Transverse colon (tissue), 4 donors: ENCODE measurements at regions of chr2 and their contacts with region 1.

Region 1: DNA sequence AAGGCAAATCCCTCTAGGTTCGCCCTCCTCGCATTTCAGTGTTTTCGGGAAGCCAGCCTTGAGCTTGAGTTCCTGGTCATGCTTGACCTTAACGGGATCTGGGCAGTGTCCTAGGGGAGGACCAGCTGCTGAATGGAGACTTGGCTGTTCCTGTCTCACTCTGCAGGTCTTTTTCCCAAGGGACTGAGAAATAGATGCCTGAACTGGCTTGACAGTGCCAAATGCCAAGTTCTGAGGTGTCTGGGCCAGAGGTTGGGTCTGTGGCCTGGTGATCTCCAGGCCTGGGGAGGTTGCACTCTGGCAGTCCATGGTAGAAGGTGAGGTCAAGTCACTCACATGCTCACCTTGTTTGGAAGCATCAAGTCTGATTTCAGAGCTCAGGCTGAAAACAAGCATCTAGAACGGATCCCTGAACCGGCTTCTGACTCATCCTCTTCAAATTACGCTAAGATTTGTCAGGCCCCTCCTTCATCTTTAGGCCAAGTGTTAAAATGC is 19.6 kb downstream of the RHOB start:
- DNase-seq: no peak
- H3K4me3 ChIP-seq: no peak overlapping the region
- H3K27ac ChIP-seq: peak overlapping the region in 3 of 4 donors; percentile 14 to 51 (median 28)
- H3K4me1 ChIP-seq: peaks cover 0 to 7% (median 3%) of the 10 kb centered on the region in 4 donors
- H3K27me3 ChIP-seq: no peaks in the 10 kb centered on the region
- CTCF ChIP-seq: no peak
- EP300 ChIP-seq: no peak
- POLR2A ChIP-seq: no peak

Region 2: GRCh38 chr2:20326163-20326780 is 140.2 kb before region 1 on chr2:
- in situ Hi-C with region 1: no loop called
- intact Hi-C with region 1: no loop called
- DNase-seq: peak; percentile 55
- H3K4me3 ChIP-seq: no peak overlapping the region
- H3K27ac ChIP-seq: peak overlapping the region in 3 of 4 donors; percentile 2 to 28 (median 5)
- H3K4me1 ChIP-seq: peaks cover 17 to 54% (median 28%) of the 10 kb centered on the region in 4 donors
- H3K27me3 ChIP-seq: no peaks in the 10 kb centered on the region
- CTCF ChIP-seq: peak; percentile 43 to 68 (median 66)
- EP300 ChIP-seq: no peak
- POLR2A ChIP-seq: no peak

Region 3: GRCh38 chr2:20419007-20419576 is 47.4 kb before region 1 on chr2:
- in situ Hi-C with region 1: no loop called
- intact Hi-C with region 1: loop called (anchors 2 kb)
- DNase-seq: peak; percentile 57
- H3K4me3 ChIP-seq: no peak overlapping the region
- H3K27ac ChIP-seq: peak overlapping the region; percentile 49 to 86 (median 80)
- H3K4me1 ChIP-seq: peaks cover 16 to 37% (median 27%) of the 10 kb centered on the region in 4 donors
- H3K27me3 ChIP-seq: no peaks in the 10 kb centered on the region
- CTCF ChIP-seq: no peak
- EP300 ChIP-seq: no peak
- POLR2A ChIP-seq: no peak